ENCODE measurements at regions of chr9 and their contacts with region 1.

Region 1: GRCh38 chr9:125407974-125408900 is 146.6 kb downstream of the GAPVD1 start:
- DNase-seq: peak; percentile 88 to 92 (median 89)
- ATAC-seq: peak; percentile 87
- H3K4me3 ChIP-seq: peak overlapping the region; percentile 52
- H3K27ac ChIP-seq: peak overlapping the region; percentile 25; the same call in 1 of the 3 replicates
- H3K4me1 ChIP-seq: peaks cover 9 to 56% of the 10 kb centered on the region in 2 experiments; a peak in 4 of 5 replicates
- H3K27me3 ChIP-seq: no peaks in the 10 kb centered on the region; a peak in 1 of 5 replicates
- CTCF ChIP-seq: peak; percentile 87 to 97 (median 93)
- EP300 ChIP-seq: no peak
- POLR2A ChIP-seq: no peak
- RAD21 ChIP-seq: peak; percentile 84 to 91

Region 2: DNA sequence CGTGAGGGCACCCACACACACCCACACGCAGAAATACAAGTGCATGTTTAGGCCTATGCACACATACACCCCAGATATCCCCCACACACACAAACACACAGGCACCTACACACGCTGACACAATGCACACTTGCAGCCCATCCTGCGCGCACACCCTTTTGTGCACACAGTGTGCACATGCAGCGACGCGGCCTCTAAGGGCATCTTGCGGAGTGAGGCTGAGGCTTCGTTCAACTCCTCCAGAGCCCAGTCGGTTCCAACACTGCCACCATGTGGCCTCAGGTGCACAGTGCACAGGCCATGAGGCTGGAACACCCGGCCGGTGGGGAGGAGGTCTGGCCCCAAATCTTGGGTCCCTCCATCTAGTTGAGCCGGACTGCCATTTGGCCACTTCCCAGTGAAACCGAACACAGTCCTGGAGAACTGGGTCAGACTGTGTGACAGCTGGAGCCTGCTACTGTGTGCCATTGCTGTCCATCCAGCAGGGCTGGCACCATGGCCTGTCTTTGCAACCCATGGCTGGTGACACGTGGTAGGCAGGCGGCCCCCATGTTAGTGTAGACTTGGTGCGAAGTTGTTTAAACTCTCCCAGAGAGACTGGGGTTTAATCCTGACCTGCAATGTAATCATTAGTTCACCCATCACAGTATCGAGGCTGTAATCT is 820.7 kb after region 1 on chr9:
- CTCF ChIA-PET with region 1: interaction called, 7 read pairs
- POLR2A ChIA-PET with region 1: no interaction called
- in situ Hi-C with region 1: loop called (anchors 5 kb)
- intact Hi-C with region 1: loop called (anchors 2 kb)
- DNase-seq: peak; percentile 70 to 82 (median 76)
- ATAC-seq: peak; percentile 99
- H3K4me3 ChIP-seq: no peak overlapping the region
- H3K27ac ChIP-seq: no peak overlapping the region
- H3K4me1 ChIP-seq: no peaks in the 10 kb centered on the region
- H3K27me3 ChIP-seq: peaks cover 0 to 32% of the 10 kb centered on the region in 2 experiments; a peak in 4 of 5 replicates
- CTCF ChIP-seq: peak; percentile 82 to 90 (median 85)
- EP300 ChIP-seq: no peak
- POLR2A ChIP-seq: no peak
- RAD21 ChIP-seq: peak; percentile 76 to 84

Region 3: DNA sequence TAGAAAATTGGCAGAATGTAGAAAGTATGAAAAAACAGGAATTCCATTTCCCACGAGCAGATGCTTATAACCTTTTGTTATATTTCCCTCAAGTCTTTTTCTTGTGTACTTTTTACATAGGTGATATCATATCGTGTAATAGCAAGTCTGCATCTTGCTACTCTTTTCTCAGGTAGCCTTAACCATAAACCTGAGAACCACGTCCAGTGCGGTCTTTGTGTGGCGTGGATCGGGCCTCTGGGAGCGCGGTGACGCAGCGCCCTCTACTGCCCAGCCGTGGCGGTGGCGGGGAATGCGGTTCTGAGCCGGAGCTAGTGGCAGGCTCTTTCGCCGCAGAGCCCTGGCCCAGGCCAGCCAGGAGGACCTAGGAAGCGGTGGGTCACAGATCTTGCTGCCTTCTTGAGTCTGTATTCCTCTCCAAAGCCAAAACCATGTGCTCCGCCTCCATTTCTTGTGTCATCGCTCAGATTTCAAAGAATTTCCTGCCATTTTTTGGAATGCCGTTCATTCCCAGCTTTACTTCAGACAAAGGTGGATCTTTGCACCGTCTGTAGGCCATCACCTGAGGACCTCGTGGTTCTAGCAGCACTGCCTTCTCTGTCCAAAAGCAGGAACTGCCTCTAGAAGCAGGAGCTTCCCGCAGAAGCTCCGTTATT is 990.3 kb after region 1 on chr9:
- CTCF ChIA-PET with region 1: interaction called, 5 read pairs
- POLR2A ChIA-PET with region 1: no interaction called
- in situ Hi-C with region 1: loop called (anchors 10 kb)
- intact Hi-C with region 1: loop called (anchors 5 kb)
- DNase-seq: peak; percentile 72 to 83 (median 80)
- ATAC-seq: peak; percentile 98
- H3K4me3 ChIP-seq: no peak overlapping the region
- H3K27ac ChIP-seq: no peak overlapping the region
- H3K4me1 ChIP-seq: peaks cover 0 to 6% of the 10 kb centered on the region in 2 experiments; a peak in 1 of 5 replicates
- H3K27me3 ChIP-seq: peaks cover 23 to 77% of the 10 kb centered on the region in 2 experiments; a peak in 4 of 5 replicates
- CTCF ChIP-seq: peak; percentile 89 to 98 (median 92)
- EP300 ChIP-seq: no peak
- POLR2A ChIP-seq: no peak
- RAD21 ChIP-seq: peak; percentile 77 to 90

Region 4: DNA sequence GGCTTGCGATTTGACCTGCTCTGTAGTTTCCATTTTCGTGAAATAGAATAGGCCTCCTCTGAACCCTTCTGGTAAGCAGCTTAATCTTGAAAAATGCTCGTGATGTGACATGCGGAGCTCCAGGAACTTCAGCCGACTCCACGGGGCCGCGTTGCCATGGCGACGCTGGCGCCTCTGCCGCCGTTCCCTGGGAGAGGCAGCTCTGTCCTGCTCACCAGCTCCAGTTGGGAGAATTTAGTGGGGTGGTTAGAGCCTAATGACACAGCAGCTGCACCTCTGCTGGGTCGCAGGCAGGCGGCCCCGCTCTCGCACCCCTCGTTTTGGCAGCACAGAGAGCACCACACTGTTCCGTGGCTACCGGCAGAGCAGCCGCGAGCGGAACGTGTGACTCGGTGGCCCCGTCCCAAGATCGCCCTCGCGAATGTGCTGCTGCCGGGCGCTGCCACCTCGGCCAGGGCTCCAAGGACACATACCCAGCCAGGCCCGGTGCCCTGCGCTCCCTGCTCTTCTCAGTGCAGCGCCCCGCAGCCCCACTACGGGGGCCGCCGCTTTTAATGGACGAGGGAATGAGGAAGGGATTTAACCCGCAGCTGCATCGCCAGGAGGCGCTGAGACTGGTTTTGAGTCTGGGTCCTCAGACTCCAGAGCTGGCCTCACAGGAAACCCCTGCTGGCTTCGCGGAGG is 1074.3 kb after region 1 on chr9:
- CTCF ChIA-PET with region 1: no interaction called
- POLR2A ChIA-PET with region 1: no interaction called
- in situ Hi-C with region 1: loop called (anchors 5 kb)
- intact Hi-C with region 1: no loop called
- DNase-seq: peak in 2 of 4 experiments; percentile 36
- ATAC-seq: no peak
- H3K4me3 ChIP-seq: no peak overlapping the region
- H3K27ac ChIP-seq: no peak overlapping the region
- H3K4me1 ChIP-seq: peaks cover 0 to 8% of the 10 kb centered on the region in 2 experiments; a peak in 2 of 5 replicates
- H3K27me3 ChIP-seq: peaks cover 26 to 79% of the 10 kb centered on the region in 2 experiments; a peak in 4 of 5 replicates
- CTCF ChIP-seq: no peak
- EP300 ChIP-seq: no peak
- POLR2A ChIP-seq: no peak
- RAD21 ChIP-seq: no peak